A549 (cell line): ENCODE measurements at regions of chr2 and their contacts with region 1.

Region 1: DNA sequence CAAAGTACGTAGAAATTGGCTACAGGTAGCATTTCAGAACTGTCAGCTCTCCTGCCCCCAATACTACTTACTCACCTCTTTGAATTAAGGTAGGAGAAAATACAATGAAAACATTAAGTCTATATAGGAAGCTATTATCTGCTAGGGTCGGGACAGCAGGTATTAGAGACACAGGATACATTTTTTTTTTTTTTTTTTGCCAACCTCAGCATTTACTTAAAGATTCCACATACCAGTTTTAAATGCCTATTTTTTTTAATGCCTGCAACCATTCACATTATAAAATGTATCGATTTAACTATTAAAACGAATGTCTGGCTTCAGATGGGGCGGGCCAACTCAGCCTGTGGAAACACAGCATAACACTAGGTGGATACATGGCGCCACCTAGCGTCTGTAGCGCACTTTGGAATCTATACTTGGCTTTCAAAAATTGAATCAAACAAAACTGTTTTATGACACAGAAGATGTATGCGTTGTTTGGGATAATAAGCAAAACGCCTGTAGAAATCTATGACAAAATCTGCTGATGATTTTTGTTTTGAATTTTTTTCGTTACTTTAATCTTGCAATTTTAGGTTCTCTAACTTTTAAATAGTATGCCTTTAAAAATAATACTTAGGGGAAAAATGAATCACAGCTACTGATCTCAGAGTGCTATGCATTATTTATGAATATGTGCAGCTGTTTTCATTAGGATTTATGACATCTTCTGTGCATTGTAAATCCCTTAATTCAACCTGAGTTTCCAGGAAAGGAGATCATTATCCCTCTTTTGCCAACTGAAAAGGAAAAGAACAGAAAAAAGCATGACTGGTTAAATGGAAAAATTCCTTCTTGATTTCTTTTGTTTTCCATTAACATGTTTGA is 261.0 kb downstream of the NYAP2 start:
- DNase-seq: peak; percentile 53 to 62
- ATAC-seq: peak; percentile 69 to 90; a peak in 3 of 6 replicates
- H3K4me3 ChIP-seq: no peak overlapping the region
- H3K27ac ChIP-seq: no peak overlapping the region
- H3K4me1 ChIP-seq: no peaks in the 10 kb centered on the region
- CTCF ChIP-seq: peak; percentile 92
- EP300 ChIP-seq: no peak
- POLR2A ChIP-seq: no peak
- RAD21 ChIP-seq: peak; percentile 96 to 97

Region 2: GRCh38 chr2:225122583-225123486 is 537.7 kb before region 1 on chr2:
- CTCF ChIA-PET with region 1: interaction called, 11 read pairs
- POLR2A ChIA-PET with region 1: no interaction called
- DNase-seq: peak in 1 of 2 experiments; percentile 17
- ATAC-seq: no peak
- H3K4me3 ChIP-seq: no peak overlapping the region
- H3K27ac ChIP-seq: no peak overlapping the region
- H3K4me1 ChIP-seq: peaks cover 19% of the 10 kb centered on the region
- CTCF ChIP-seq: peak; percentile 49
- EP300 ChIP-seq: no peak
- POLR2A ChIP-seq: no peak
- RAD21 ChIP-seq: peak; percentile 61 to 72

Region 3: DNA sequence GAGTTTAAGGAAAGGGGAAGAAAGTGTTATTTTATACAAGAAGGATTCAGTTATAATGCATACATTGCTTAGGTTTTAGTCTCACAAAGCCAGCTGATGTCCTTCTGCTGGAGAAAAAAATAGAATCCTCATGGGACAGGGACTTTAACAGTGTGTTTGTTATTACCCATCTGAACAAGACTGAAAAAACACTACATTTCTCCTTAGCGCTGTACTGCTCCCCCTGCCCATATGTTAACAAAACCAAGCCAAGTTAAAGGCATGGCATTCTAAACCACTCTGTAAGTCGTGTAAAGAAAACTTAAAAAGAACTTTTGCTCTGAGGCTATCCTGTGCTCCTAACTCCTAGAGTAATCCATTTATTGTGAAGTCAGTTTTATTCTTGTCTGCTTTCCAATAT is 363.5 kb before region 1 on chr2:
- CTCF ChIA-PET with region 1: no interaction called
- POLR2A ChIA-PET with region 1: no interaction called
- DNase-seq: no peak
- ATAC-seq: no peak
- H3K4me3 ChIP-seq: no peak overlapping the region
- H3K27ac ChIP-seq: no peak overlapping the region
- H3K4me1 ChIP-seq: no peaks in the 10 kb centered on the region
- CTCF ChIP-seq: no peak
- EP300 ChIP-seq: no peak
- POLR2A ChIP-seq: no peak
- RAD21 ChIP-seq: no peak

Region 4: DNA sequence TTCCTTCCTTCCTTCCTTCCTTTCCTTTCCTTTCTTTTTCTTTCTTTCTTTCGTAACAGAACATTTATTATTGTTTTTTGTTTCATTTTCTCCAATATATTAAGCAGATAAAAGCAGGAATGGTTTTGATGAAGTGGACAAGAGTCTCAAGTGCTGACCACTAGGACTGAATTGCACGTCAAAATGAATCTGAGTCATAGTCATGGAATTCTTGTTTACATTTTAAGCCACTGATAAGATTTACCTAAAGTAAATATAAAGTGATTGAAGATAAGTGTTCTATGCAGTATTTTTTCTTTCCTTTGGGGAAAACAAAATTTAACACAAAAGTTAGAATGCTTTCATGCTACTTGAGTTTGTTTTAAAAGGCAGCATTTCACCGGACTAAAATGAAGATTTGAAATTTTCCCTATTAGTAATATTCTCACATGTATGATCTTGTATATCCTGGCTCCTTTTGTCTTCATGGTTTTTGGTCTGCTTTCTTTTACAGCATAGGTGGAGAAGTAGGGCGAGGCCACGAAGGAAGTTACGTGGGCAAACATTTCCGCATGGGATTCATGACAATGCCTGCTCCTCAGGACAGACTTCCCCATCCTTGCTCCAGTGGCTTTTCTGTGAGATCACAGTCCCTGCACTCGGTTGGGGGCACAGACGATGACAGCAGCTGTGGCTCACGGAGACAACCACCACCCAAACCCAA is 147.5 kb before region 1 on chr2:
- CTCF ChIA-PET with region 1: no interaction called
- POLR2A ChIA-PET with region 1: no interaction called
- DNase-seq: peak in 1 of 2 experiments; percentile 53
- ATAC-seq: peak; percentile 30 to 75; a peak in 4 of 6 replicates
- H3K4me3 ChIP-seq: no peak overlapping the region
- H3K27ac ChIP-seq: peak overlapping the region; percentile 3 to 75; a peak in 3 of 6 replicates
- H3K4me1 ChIP-seq: peaks cover 14% of the 10 kb centered on the region
- CTCF ChIP-seq: no peak
- EP300 ChIP-seq: no peak
- POLR2A ChIP-seq: no peak
- RAD21 ChIP-seq: no peak

Region 5: DNA sequence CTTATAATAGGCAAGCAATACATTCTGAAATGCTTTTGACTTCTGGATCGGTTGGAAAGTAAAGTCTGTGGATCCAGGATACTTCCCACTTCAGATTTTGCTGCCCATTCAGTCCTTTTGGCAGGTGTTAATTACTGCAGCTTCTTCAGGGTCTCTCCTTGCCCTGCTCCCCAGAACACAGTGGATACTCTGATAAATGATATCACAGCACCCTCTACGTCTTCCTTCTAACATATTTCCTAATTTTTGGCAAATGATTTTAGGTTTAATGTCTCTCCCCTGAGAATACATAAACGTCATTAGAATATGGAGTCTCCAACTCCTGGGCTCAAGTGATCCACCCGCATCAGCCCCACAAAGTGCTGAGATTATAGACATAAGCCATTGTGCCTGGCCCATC is 11.2 kb before region 1 on chr2:
- CTCF ChIA-PET with region 1: interaction called, 34 read pairs
- POLR2A ChIA-PET with region 1: no interaction called
- DNase-seq: no peak
- ATAC-seq: no peak
- H3K4me3 ChIP-seq: no peak overlapping the region
- H3K27ac ChIP-seq: no peak overlapping the region
- H3K4me1 ChIP-seq: no peaks in the 10 kb centered on the region
- CTCF ChIP-seq: no peak
- EP300 ChIP-seq: no peak
- POLR2A ChIP-seq: no peak
- RAD21 ChIP-seq: 0 out of 5 replicates have a peak, but pooled peaks have one; percentile 11 to 13

Region 6: DNA sequence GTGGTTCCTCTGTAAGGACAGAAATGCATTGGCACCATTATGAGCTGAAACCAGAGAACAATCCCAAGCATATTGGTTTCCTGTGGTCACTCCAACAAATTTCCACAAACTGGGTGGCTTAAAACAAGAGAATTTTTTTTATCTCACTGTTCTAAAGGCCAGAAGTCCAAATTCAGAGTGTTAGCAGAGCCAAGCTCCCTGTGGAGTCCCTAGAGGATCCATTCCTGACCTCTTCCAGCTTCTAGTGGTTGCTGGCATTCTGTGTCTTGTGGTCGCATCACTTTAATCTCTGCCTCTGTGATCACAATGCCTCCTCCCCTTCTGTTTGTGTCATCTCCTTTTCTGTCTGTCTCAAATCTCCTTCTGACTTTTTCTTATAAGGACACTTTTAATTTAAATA is 119.3 kb after region 1 on chr2:
- CTCF ChIA-PET with region 1: no interaction called
- POLR2A ChIA-PET with region 1: no interaction called
- DNase-seq: no peak
- ATAC-seq: no peak
- H3K4me3 ChIP-seq: no peak overlapping the region
- H3K27ac ChIP-seq: no peak overlapping the region
- H3K4me1 ChIP-seq: no peaks in the 10 kb centered on the region
- CTCF ChIP-seq: no peak
- EP300 ChIP-seq: no peak
- POLR2A ChIP-seq: no peak
- RAD21 ChIP-seq: no peak